ENCODE measurements at regions of chr2 and their contacts with region 1.

Region 1: DNA sequence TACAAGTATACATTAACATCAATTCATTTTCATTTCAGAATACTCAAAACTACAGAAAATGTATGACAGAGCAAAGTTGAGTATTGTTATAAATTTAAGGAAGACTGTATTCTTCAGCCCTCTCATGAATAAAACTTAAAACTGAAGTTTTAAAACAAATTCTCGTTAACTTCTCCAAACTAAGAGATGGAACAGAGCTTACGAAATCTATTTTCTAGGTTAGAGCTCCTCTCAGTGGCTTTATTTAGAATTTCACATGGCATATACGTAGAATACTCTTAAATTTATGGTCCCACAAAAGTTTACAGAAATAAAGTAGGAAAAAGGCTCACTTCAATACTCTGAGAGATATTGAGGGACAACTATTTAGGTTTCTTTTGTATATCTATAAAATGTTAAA is 612.1 kb downstream of the KCNJ3 start:
- DNase-seq: no peak
- H3K4me3 Mint-ChIP-seq: no peak overlapping the region
- H3K27ac Mint-ChIP-seq: no peak overlapping the region
- H3K4me1 Mint-ChIP-seq: no peaks in the 10 kb centered on the region
- H3K27me3 Mint-ChIP-seq: no peaks in the 10 kb centered on the region

Region 2: DNA sequence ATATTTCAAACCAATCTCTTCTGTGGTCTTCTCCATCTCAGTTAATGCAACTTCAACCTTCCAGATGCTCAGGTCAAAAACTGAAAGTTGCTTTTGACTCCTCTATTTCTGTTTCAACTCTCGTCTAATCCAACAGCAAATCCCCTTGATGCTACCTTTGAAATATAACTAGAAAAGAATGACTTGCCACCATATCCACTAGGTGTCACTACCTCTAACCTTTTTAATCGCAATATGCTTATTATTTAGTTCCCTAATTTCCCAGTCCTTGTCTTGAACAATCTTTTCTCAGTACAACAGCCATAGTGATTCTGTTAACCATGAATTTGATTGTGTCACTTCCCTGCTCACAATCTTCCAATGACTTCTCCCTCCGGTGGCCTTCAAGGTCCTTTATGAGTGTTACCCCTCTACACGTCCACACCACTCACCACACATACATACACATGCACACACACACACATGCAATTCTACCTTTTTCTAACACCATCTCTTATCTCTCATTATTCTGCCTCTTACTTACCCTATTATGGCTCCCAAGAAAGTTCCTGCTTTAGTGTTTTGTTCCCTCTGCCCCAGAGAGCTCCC is 857.6 kb before region 1 on chr2:
- intact Hi-C with region 1: loop called (anchors 2 kb)
- DNase-seq: no peak
- H3K4me3 Mint-ChIP-seq: no peak overlapping the region
- H3K27ac Mint-ChIP-seq: no peak overlapping the region
- H3K4me1 Mint-ChIP-seq: no peaks in the 10 kb centered on the region
- H3K27me3 Mint-ChIP-seq: no peaks in the 10 kb centered on the region

Region 3: GRCh38 chr2:154623819-154624218 is 686.8 kb before region 1 on chr2:
- intact Hi-C with region 1: loop called (anchors 10 kb)
- DNase-seq: no peak
- H3K4me3 Mint-ChIP-seq: no peak overlapping the region
- H3K27ac Mint-ChIP-seq: no peak overlapping the region
- H3K4me1 Mint-ChIP-seq: no peaks in the 10 kb centered on the region
- H3K27me3 Mint-ChIP-seq: no peaks in the 10 kb centered on the region

Region 4: DNA sequence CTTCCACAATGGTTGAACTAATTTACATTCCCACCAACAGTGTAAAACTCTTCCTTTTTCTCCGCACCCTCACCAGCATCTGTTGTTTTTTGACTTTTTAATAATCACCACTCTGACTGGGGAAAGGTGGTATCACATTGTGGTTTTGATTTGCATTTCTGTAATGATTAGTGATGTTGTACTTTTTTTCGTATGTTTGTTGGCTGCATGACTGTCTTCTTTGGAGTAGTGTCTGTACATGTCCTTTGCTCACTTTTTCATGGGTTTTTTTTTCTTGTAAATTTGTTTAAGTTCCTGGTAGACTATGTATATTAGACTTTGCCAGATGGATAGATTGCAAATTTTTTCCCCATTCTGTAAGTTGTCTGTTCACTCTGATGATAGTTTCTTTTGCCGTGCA is 37.3 kb before region 1 on chr2:
- intact Hi-C with region 1: no loop called
- DNase-seq: no peak
- H3K4me3 Mint-ChIP-seq: no peak overlapping the region
- H3K27ac Mint-ChIP-seq: no peak overlapping the region
- H3K4me1 Mint-ChIP-seq: no peaks in the 10 kb centered on the region
- H3K27me3 Mint-ChIP-seq: no peaks in the 10 kb centered on the region